Right ventricle myocardium inferior (tissue), 1 donor: ENCODE measurements at regions of chr5 and their contacts with region 1.

Region 1: DNA sequence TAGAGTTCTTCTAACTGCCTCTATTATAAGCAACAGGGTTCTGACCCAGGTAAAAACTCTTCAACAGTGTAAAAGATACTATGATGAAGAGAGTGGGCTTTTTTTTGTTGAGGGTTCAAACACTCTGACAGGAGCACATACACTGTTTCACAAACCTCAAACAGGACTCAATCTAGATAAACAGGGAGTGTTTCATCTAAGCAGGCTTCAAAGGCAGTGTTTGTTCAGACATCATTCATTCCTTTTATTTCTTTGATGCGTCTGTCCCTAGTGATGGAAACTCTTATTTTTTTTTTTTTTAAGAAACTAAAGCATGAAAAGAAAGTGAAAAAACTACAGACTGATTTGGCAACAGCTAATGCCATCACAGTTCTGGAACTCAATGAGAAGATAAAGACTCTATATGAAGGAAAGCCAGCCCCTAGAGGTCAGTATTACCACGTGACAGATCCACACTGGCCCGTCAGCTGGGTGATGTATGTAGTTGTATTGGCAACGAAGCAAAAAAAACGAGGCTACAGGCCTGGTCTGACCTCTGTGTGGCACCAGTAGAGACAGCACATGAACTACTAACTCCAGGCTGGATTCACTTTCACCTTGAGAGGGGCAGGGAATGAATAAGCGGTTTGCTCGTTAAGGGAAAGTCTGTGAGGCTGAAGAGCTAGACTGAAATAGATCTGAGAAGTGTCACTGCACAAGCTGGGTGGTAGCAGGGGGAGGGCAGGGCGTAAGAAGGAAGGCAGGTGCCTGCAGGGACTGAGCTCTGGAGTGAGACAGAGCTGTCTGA is 172.2 kb downstream of the CCDC192 start:
- DNase-seq: no peak
- ATAC-seq: peak; percentile 89

Region 2: DNA sequence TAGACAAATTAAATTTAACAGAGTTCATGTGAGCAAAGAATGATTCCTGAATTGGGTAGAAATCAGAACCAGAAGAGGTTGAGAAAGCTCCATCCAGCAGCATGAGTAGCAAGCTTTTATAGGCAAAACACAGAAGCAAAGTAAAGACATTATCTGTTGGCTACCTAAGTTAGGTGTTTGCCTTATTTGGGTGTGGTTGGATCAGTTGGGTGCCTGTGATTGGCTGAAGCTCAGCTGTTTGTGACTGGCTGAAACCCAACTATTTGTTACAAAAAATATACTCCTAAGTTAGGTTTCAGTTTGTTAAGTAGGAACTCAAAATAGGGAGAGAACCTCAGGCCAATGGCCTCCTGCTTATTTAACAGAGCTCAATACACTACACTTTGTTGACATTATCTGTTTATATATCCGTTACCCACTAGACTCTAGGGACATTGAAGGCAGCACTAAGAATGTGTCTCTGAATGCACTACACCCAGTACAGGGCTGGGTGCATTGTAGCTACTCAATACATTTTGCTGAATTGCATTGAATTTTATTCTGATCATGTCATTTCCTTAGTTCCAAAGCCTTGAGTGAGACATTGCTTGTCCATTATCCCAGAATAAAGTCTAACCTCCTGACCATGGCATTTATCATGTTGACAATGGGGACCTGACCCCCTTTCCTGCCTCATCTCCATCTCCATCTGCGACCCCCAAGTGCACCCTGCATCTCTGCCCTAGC is 73.5 kb before region 1 on chr5:
- intact Hi-C with region 1: no loop called
- DNase-seq: no peak
- ATAC-seq: no peak

Region 3: GRCh38 chr5:127820910-127821553 is 54.4 kb before region 1 on chr5:
- intact Hi-C with region 1: no loop called
- DNase-seq: no peak
- ATAC-seq: no peak

Region 4: DNA sequence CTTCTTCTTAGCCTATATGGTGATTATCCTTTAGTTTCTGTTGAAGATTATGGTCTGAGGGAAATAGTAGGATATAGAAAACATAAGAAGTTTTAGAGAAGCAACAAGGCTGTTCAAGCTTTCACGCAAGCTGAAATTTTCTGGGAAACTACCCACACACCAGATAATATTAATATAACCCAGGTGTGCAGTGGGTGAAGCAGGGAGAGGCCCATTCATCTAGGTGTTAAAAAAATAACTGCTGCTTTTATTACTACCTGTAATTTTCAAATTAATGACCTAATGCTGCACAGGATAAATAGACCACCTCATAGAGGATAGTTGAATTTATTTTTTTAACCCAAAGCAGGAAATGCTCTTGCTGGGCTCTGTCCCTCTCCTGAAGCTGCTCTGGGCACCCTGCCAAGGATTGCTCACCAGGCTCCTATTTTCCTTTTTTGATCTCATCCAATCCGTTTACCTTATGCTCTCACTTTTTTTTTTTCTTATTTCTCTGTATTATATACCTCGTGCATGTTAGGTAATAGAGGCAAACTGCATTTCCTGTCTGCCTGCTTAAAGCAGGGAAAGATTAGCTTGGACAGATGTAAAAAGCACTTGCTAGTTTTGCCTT is 83.8 kb after region 1 on chr5:
- intact Hi-C with region 1: loop called (anchors 5 kb)
- DNase-seq: peak; percentile 68
- ATAC-seq: no peak

Region 5: DNA sequence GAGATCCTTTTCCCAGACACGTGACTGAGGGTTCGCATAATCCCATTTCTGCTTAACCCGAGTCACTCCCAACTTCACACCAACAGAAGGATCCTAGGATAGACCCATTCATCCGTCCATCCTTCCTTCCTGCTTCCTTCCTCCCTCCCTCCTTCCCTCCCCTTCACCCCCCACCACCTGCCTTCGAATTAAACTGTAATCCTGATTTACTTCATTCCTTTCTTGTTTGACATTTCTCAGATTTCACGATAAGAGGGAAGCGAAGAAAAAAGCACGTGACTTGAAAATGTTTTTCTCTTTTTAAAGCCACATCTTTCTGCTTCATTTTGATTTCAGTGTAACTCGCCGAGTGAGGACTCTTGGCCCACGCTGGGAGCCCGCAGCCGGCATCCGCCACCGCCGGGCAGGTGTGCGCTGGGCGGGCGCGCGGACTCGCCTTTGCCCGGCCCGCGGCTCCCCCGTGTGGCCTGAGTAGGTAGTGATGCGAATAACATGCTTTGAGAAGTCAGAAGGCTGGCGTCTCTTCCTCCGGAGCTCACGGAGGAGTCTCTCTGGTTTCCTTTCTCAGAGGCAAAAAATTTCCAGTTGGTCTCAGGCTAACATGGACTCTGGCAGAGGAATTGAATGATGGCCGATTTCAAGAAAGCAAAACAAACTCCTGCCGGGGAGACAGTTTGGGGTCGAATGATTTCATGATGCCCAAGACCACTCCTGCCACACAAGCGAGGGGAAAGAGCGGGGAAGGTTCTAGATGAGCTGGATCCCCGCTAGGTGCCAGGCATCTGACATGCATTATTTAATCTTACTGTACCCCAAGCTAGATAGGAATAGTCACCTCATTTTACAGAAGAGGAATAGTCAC is 325.9 kb after region 1 on chr5:
- intact Hi-C with region 1: loop called (anchors 5 kb)
- DNase-seq: peak; percentile 90
- ATAC-seq: peak; percentile 71